Activated CD4-positive, alpha-beta memory T cell treated with anti-CD3 and anti-CD28 coated beads for 36 hours (primary cell): ENCODE measurements at regions of chr7 and their contacts with region 1.

Region 1: DNA sequence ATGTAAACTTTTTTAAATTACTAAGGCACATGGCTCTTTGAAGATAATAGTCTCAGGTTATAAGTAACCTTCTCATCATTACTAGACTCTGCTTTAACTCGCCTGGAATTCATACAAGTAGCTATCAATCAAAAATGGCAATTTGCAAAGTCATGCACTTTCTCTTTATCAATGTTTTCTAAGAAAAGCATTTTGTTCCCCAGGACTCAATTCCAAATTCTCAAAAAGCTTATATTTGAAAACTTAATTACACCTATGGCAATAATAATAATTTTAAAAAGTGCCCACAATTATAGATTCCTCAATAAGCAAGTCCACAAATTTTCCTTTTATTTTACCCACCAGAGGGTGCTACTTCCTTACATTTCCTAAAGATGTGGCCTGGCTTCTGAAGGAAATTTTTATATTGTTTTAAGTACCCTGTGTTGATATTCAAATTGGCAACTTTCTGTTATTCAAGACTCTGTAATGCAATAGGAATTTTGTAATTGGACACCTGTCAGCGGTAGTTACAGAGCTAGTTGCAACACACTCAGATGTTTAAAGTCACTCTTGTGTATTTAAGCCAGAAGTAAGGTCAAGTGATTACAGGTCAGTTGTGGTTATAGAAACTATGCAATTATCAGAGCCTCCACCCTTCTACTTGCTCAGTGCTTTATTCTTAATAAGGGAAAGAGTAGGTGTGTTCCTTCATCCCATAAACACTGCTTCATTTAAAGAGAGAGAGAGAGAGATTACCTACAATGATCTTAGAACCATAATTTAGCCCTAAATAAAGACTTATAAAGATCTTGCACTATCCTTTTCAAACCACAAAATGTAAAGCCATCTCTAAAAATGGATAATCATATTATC is 47.1 kb upstream of the HYAL4 start:
- DNase-seq: no peak
- H3K4me3 Mint-ChIP-seq: no peak overlapping the region
- H3K27ac Mint-ChIP-seq: no peak overlapping the region
- H3K4me1 Mint-ChIP-seq: no peaks in the 10 kb centered on the region
- H3K27me3 Mint-ChIP-seq: peaks cover 2% of the 10 kb centered on the region

Region 2: DNA sequence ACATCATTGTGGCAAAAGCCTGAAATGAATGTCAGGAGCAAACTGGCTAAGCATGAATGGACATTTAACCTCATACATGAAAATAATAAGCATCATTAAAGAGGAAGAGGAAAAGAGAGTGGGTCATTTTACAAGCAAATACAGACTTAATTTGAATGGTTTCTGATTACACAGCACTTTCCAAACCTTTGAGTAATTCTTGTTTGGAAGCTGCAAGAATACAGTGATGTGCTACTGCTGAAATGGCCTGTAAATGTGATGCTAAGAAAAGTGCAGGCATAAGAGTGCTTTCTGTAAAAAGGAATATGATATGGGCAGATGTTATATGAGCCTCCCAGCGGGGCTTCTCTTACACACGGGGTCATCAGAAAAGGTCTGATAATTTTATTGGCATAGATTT is 832.6 kb before region 1 on chr7:
- CTCF ChIA-PET with region 1: no interaction called
- POLR2A ChIA-PET with region 1: no interaction called
- intact Hi-C with region 1: no loop called
- DNase-seq: no peak
- H3K4me3 Mint-ChIP-seq: no peak overlapping the region
- H3K27ac Mint-ChIP-seq: no peak overlapping the region
- H3K4me1 Mint-ChIP-seq: no peaks in the 10 kb centered on the region
- H3K27me3 Mint-ChIP-seq: no peaks in the 10 kb centered on the region

Region 3: DNA sequence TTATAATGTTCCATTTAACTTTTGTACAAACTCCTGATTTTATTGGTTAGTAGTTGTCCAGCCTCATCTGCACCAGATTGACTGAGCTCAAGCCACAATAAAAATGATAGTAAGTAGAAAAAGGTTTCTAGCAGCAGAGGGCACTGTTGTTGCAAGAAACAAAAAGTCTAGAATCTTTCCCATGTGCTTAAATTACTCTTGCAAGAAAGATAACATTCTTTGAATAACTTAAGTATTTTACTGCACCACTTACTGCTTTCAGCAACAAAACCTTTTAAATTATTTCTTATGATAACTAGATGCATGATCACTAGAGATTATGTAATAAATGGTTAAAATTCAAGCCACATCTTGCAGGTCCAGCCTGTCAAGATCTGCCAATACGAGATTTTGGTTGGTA is 115.2 kb before region 1 on chr7:
- CTCF ChIA-PET with region 1: interaction called, 6 read pairs
- POLR2A ChIA-PET with region 1: no interaction called
- intact Hi-C with region 1: loop called (anchors 2 kb)
- DNase-seq: no peak
- H3K4me3 Mint-ChIP-seq: no peak overlapping the region
- H3K27ac Mint-ChIP-seq: no peak overlapping the region
- H3K4me1 Mint-ChIP-seq: no peaks in the 10 kb centered on the region
- H3K27me3 Mint-ChIP-seq: no peaks in the 10 kb centered on the region